Uterus (tissue), 4 donors: ENCODE measurements at regions of chr3 and their contacts with region 1.

Region 1: GRCh38 chr3:128170805-128171516 is 17.7 kb downstream of the EEFSEC start:
- DNase-seq: peak; percentile 73 to 78
- H3K4me3 ChIP-seq: no peak overlapping the region
- H3K27ac ChIP-seq: peak overlapping the region in 1 of 2 donors; percentile 21
- H3K4me1 ChIP-seq: peaks cover 4 to 21% of the 10 kb centered on the region in 2 donors
- H3K27me3 ChIP-seq: no peaks in the 10 kb centered on the region
- CTCF ChIP-seq: peak; percentile 79 to 94 (median 87)
- POLR2A ChIP-seq: no peak

Region 2: DNA sequence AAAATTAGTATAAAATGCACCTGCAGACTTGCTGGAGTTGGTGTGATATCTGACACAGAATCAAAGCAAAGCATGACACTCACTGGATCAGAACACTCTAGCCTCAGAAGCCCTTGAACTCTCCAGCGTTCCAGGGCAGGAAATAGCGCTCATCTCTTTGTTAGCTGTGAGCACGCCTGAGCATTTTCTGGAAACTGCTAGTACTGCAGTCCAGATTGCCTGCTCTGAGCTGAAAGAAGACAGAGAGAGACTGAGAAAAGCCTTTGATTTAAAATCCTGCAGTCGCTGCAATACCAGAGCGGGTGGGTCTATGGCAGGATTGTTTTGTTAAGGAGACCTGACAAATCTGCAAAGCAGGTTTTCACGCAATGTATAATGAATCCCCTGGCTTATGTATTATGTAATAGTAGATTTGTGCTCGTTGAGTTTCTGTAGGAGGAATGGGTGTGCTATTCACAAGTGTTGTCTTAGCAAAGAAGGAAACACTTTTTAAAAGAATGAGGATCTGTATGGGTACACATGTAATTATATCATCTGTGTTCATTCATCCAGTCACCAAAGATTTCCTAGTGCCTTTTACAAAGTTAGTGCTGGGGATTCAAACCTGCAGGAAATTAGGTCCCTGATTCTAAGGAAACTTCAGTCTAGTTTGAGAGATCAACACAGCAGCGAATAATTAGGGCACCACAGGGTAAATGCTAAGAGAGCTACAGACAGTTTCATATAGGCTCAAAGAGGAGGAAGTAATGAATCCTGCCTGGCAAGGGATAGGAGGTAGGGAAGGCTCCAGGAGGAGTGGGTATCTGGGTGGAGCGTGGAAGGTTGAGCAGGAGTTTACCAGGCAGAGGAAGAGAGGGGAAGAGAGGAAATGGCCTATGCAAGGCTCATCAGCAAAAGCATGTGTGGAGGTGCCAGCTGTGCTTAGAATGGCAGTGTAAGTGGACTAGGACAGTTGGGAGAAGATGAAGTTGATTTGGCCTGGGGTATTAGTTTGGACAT is 322.5 kb before region 1 on chr3:
- intact Hi-C with region 1: no loop called
- DNase-seq: no peak
- H3K4me3 ChIP-seq: no peak overlapping the region
- H3K27ac ChIP-seq: no peak overlapping the region
- H3K4me1 ChIP-seq: no peaks in the 10 kb centered on the region
- H3K27me3 ChIP-seq: no peaks in the 10 kb centered on the region
- CTCF ChIP-seq: no peak
- POLR2A ChIP-seq: no peak

Region 3: GRCh38 chr3:128041344-128041743 is 129.6 kb before region 1 on chr3:
- intact Hi-C with region 1: no loop called
- DNase-seq: no peak
- H3K4me3 ChIP-seq: no peak overlapping the region
- H3K27ac ChIP-seq: no peak overlapping the region
- H3K4me1 ChIP-seq: no peaks in the 10 kb centered on the region
- H3K27me3 ChIP-seq: no peaks in the 10 kb centered on the region
- CTCF ChIP-seq: no peak
- POLR2A ChIP-seq: no peak

Region 4: GRCh38 chr3:128487813-128488635 is 317.1 kb after region 1 on chr3:
- intact Hi-C with region 1: loop called (anchors 5 kb)
- DNase-seq: peak; percentile 96 to 97
- H3K4me3 ChIP-seq: peak overlapping the region; percentile 56 to 98
- H3K27ac ChIP-seq: peak overlapping the region; percentile 99 to 100
- H3K4me1 ChIP-seq: peaks cover 0 to 18% of the 10 kb centered on the region in 2 donors
- H3K27me3 ChIP-seq: no peaks in the 10 kb centered on the region
- CTCF ChIP-seq: peak in 1 of 4 experiments; percentile 29
- POLR2A ChIP-seq: peak; percentile 99 to 100

Region 5: DNA sequence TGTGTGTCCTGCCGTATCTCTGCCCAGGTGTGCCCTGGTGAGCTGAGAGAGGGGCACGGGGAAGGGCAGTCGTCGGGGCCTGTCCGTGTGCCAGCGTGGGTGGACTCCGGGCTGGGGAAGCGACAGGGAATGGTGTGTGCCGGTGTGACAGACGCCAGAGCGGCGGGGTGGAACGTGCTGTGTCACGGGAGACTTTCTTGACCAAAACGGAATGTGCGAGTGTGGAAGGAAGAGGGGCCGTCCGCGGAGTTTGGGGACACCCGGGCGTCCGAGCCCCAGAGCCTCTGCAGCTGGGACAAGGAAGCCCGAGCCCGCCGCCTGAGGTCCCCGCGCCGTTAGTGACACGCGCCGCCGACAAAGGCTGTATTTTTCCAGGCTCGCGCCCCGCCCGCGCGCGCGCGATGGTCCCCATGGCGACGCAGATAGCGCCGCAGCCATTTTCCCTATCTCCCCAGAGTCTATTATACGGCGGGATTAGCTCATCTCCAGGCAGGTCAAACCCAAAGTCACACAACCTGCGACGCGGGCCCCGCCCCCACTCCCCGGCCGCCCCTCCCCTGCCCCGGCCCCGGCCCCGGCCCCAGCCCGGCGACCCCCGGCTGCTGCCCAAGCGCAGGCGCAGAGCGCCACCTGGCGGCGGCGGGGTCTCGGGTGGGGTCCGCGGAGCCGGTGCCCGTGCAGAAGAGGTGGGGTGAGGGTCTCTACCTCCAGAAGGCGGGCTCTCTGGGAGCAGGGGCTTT is 326.6 kb after region 1 on chr3:
- intact Hi-C with region 1: loop called (anchors 5 kb)
- DNase-seq: peak; percentile 71 to 72
- H3K4me3 ChIP-seq: peak overlapping the region; percentile 31 to 46
- H3K27ac ChIP-seq: peak overlapping the region; percentile 56 to 69
- H3K4me1 ChIP-seq: peaks cover 0 to 11% of the 10 kb centered on the region in 2 donors
- H3K27me3 ChIP-seq: no peaks in the 10 kb centered on the region
- CTCF ChIP-seq: peak; percentile 62 to 97 (median 76)
- POLR2A ChIP-seq: no peak